Kidney (tissue), 22 donors: ENCODE measurements at regions of chr1 and their contacts with region 1.

Region 1: GRCh38 chr1:11661103-11661502 is 2.9 kb upstream of the FBXO6 start:
- DNase-seq: no peak
- H3K4me3 ChIP-seq: no peak overlapping the region
- H3K27ac ChIP-seq: no peak overlapping the region
- H3K4me1 ChIP-seq: no peaks in the 10 kb centered on the region
- H3K27me3 ChIP-seq: no peaks in the 10 kb centered on the region
- CTCF ChIP-seq: no peak

Region 2: GRCh38 chr1:11719313-11720032 is 58.4 kb after region 1 on chr1:
- intact Hi-C with region 1: loop called (anchors 10 kb)
- DNase-seq: peak; percentile 65 to 93 (median 75)
- H3K4me3 ChIP-seq: peak overlapping the region in 2 of 3 donors; percentile 33 to 42
- H3K27ac ChIP-seq: no peak overlapping the region
- H3K4me1 ChIP-seq: peaks cover 0 to 6% (median 0%) of the 10 kb centered on the region in 3 donors
- H3K27me3 ChIP-seq: no peaks in the 10 kb centered on the region
- CTCF ChIP-seq: peak; percentile 98